ENCODE measurements at regions of chr14 and their contacts with region 1.

Region 1: GRCh38 chr14:31456841-31457664 is at the start of gene DTD2:
- DNase-seq: peak; percentile 94 to 95
- ATAC-seq: peak; percentile 100
- H3K4me3 ChIP-seq: peak within 1 kb of the TSS; percentile 50 to 78 (median 70)
- H3K27ac ChIP-seq: peak within 1 kb of the TSS; percentile 64 to 95 (median 90)
- H3K4me1 ChIP-seq: peaks cover 0 to 32% (median 16%) of the 10 kb centered on the region in 9 donors
- H3K27me3 ChIP-seq: no peaks in the 10 kb centered on the region
- CTCF ChIP-seq: peak in 3 of 9 donors; percentile 27 to 42 (median 33)
- total RNA-seq, gene DTD2: 4.2 to 9.5 (median 6.6) TPM

Region 2: DNA sequence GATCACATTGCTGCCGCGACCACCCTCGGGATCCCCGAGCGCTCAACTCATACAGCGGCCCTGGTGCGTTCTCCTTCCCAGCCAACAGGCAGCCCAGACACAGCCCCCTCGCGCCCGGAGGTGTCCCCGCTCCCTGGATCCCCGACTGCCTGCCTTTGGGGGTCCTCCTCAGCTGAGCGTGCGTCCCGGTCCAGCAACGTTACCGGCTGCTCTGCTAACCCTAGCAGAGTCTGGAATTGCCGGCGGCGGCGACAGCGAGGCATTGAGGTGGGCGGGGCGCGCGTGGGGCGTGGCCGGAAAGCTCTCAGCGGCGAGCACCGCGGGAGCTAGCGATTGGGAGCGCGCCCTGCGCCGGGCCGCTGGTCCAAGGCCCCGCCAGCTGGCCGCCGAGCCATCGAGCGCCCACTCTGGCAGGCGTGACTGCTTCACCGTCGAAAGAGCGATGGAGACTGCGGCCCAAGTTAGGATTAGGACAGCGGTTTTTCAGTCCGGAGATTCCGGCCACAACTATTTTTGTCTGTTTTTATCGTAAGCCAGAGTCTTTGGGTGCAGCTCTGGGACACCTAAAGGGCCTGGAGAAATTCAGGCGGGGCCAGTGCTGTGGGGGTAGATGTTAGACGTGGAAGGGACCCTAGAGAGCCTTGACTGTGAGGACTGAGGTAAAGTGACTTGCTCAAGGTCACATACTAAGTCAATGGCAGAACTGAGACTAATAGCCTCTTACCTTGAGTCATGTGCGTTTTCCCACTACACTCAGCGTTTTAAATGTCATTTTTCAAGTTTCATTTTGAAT is 36.5 kb before region 1 on chr14 and contains the start of gene HEATR5A:
- intact Hi-C with region 1: loop called in 2 of 10 experiments (anchors 2 kb)
- DNase-seq: peak; percentile 95 to 97
- ATAC-seq: peak; percentile 98 to 100 (median 99)
- H3K4me3 ChIP-seq: peak within 1 kb of the TSS; percentile 73 to 98 (median 94)
- H3K27ac ChIP-seq: peak within 1 kb of the TSS; percentile 39 to 95 (median 91)
- H3K4me1 ChIP-seq: peaks cover 0 to 35% (median 18%) of the 10 kb centered on the region in 9 donors
- H3K27me3 ChIP-seq: no peaks in the 10 kb centered on the region
- CTCF ChIP-seq: peak in 5 of 9 donors; percentile 7 to 58 (median 54)
- total RNA-seq, gene HEATR5A: 39.7 to 55.1 (median 46.2) TPM

Region 3: GRCh38 chr14:31510222-31510621 is 53.2 kb after region 1 on chr14:
- intact Hi-C with region 1: no loop called
- DNase-seq: no peak
- ATAC-seq: no peak
- H3K4me3 ChIP-seq: no peak overlapping the region
- H3K27ac ChIP-seq: no peak overlapping the region
- H3K4me1 ChIP-seq: peaks cover 4 to 16% (median 11%) of the 10 kb centered on the region in 9 donors
- H3K27me3 ChIP-seq: no peaks in the 10 kb centered on the region
- CTCF ChIP-seq: peak; percentile 48 to 85 (median 71)

Measured in heart right ventricle (tissue), 16 donors.